GM12878 (cell line): ENCODE measurements at regions of chr1 and their contacts with region 1.

Region 1: GRCh38 chr1:28248283-28249012 is 10.9 kb upstream of the SESN2 start:
- DNase-seq: no peak
- ATAC-seq: peak; percentile 53
- H3K4me3 ChIP-seq: peak overlapping the region; percentile 3; the same call in 1 of the 2 replicates
- H3K27ac ChIP-seq: peak overlapping the region; percentile 87
- H3K4me1 ChIP-seq: peaks cover 39% of the 10 kb centered on the region
- H3K27me3 ChIP-seq: no peaks in the 10 kb centered on the region
- CTCF ChIP-seq: peak; percentile 86 to 98 (median 91)
- EP300 ChIP-seq: no peak
- POLR2A ChIP-seq: 0 out of 2 replicates have a peak, but pooled peaks have one; percentile 13
- RAD21 ChIP-seq: peak; percentile 87

Region 2: DNA sequence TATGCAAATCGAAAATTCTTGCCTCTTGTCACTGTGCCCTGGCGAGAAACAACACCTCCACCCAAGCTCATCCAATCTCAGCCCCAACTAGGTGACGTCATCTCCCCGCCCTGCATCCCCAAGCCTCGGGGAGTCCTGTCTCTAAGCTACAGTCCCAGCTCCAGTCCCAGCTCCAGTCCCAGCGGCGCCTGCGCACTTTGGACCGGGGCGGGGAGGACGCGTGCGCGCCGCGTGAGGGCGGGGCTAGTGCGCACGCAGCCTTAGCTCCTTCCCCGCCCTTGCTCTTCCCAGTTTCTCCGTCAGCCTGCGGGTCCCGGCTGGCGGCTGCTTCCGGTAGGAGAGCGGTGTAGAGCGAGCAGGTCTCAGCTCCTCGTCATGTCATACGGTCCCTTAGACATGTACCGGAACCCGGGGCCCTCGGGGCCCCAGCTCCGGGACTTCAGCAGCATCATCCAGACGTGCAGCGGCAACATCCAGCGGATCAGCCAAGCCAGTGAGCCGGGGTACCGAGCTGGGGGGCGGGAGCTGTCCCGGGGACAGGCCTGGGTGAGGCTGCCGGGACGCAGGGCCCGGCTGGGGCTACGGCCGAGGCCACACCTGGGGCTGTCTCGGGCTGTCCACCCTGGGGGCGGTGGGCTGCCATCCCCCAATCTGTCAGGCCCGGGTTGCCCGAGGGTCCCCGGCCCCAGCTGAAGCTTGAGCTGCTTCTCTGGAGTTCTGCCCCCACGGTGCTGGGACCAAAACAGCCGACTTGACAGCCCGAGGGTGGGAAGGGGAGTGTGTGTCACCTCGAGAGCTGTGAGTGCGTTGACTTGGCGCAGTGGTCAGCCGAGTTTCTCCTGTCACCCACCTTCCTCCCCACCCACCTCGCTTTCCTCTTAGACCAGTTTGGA is 475.3 kb before region 1 on chr1 and contains the start of gene STX12:
- CTCF ChIA-PET with region 1: no interaction called
- POLR2A ChIA-PET with region 1: no interaction called
- RAD21 ChIA-PET with region 1: no interaction called
- SMC1A ChIA-PET with region 1: no interaction called
- in situ Hi-C with region 1: no loop called
- intact Hi-C with region 1: loop called (anchors 10 kb)
- DNase-seq: peak; percentile 100
- ATAC-seq: peak; percentile 93
- H3K4me3 ChIP-seq: peak within 1 kb of the TSS; percentile 81
- H3K27ac ChIP-seq: peak within 1 kb of the TSS; percentile 89
- H3K4me1 ChIP-seq: peaks cover 6% of the 10 kb centered on the region
- H3K27me3 ChIP-seq: no peaks in the 10 kb centered on the region
- CTCF ChIP-seq: no peak
- EP300 ChIP-seq: no peak
- POLR2A ChIP-seq: peak; percentile 87
- RAD21 ChIP-seq: no peak
- polyA plus RNA-seq, gene STX12: 23.5 to 26.9 TPM

Region 3: DNA sequence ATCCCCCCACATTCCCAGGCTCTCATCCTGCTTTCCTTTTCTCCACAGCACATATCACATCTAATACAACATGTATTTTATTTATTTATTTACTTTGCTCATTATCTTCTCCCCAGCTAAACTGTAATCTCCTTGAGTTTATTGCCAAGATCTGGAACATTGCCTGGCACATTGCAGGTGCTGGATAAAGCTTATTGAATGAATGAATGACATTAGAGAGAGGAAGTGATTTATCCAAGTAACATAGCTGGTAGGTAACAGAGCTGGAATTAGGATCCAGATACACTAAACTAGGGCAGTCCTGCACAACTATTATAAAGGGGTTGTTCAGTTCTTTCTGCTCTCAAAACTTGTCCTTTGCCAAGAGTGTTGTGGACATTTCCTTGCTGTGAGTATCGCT is 63.4 kb before region 1 on chr1:
- CTCF ChIA-PET with region 1: no interaction called
- POLR2A ChIA-PET with region 1: no interaction called
- RAD21 ChIA-PET with region 1: no interaction called
- SMC1A ChIA-PET with region 1: no interaction called
- in situ Hi-C with region 1: no loop called
- intact Hi-C with region 1: no loop called
- DNase-seq: no peak
- ATAC-seq: no peak
- H3K4me3 ChIP-seq: no peak overlapping the region
- H3K27ac ChIP-seq: no peak overlapping the region
- H3K4me1 ChIP-seq: peaks cover 3% of the 10 kb centered on the region
- H3K27me3 ChIP-seq: no peaks in the 10 kb centered on the region
- CTCF ChIP-seq: no peak
- EP300 ChIP-seq: no peak
- POLR2A ChIP-seq: no peak
- RAD21 ChIP-seq: no peak

Region 4: GRCh38 chr1:28235755-28236655 is 12.4 kb before region 1 on chr1 and contains the start of gene ATP5IF1:
- CTCF ChIA-PET with region 1: interaction called, 28 read pairs
- POLR2A ChIA-PET with region 1: interaction called, 125 read pairs
- RAD21 ChIA-PET with region 1: interaction called, 54 read pairs
- SMC1A ChIA-PET with region 1: interaction called, 84 read pairs
- in situ Hi-C with region 1: no loop called
- intact Hi-C with region 1: no loop called
- DNase-seq: peak; percentile 96
- ATAC-seq: peak; percentile 94
- H3K4me3 ChIP-seq: peak within 1 kb of the TSS; percentile 71
- H3K27ac ChIP-seq: peak within 1 kb of the TSS; percentile 86
- H3K4me1 ChIP-seq: peaks cover 10% of the 10 kb centered on the region
- H3K27me3 ChIP-seq: no peaks in the 10 kb centered on the region
- CTCF ChIP-seq: no peak
- EP300 ChIP-seq: no peak
- POLR2A ChIP-seq: peak; percentile 99
- RAD21 ChIP-seq: no peak
- polyA plus RNA-seq, gene ATP5IF1: 296 to 883 TPM

Region 5: GRCh38 chr1:28329395-28330153 is 81.1 kb after region 1 on chr1:
- CTCF ChIA-PET with region 1: interaction called, 28 read pairs
- POLR2A ChIA-PET with region 1: interaction called, 10 read pairs
- RAD21 ChIA-PET with region 1: interaction called, 17 read pairs
- SMC1A ChIA-PET with region 1: interaction called, 33 read pairs
- in situ Hi-C with region 1: no loop called
- intact Hi-C with region 1: loop called (anchors 2 kb)
- DNase-seq: no peak
- ATAC-seq: peak; percentile 69
- H3K4me3 ChIP-seq: peak overlapping the region; percentile 76
- H3K27ac ChIP-seq: peak overlapping the region; percentile 91
- H3K4me1 ChIP-seq: peaks cover 11% of the 10 kb centered on the region
- H3K27me3 ChIP-seq: no peaks in the 10 kb centered on the region
- CTCF ChIP-seq: no peak
- EP300 ChIP-seq: no peak
- POLR2A ChIP-seq: no peak
- RAD21 ChIP-seq: no peak

Region 6: GRCh38 chr1:28409090-28409489 is 160.6 kb after region 1 on chr1:
- CTCF ChIA-PET with region 1: interaction called, 42 read pairs
- POLR2A ChIA-PET with region 1: interaction called, 3 read pairs
- RAD21 ChIA-PET with region 1: interaction called, 9 read pairs
- SMC1A ChIA-PET with region 1: interaction called, 17 read pairs
- in situ Hi-C with region 1: no loop called
- intact Hi-C with region 1: no loop called
- DNase-seq: no peak
- ATAC-seq: no peak
- H3K4me3 ChIP-seq: no peak overlapping the region
- H3K27ac ChIP-seq: no peak overlapping the region
- H3K4me1 ChIP-seq: no peaks in the 10 kb centered on the region
- H3K27me3 ChIP-seq: no peaks in the 10 kb centered on the region
- CTCF ChIP-seq: no peak
- EP300 ChIP-seq: no peak
- POLR2A ChIP-seq: no peak
- RAD21 ChIP-seq: no peak

Region 7: GRCh38 chr1:28581536-28582247 is 333.2 kb after region 1 on chr1:
- CTCF ChIA-PET with region 1: interaction called, 22 read pairs
- POLR2A ChIA-PET with region 1: interaction called, 4 read pairs
- RAD21 ChIA-PET with region 1: interaction called, 8 read pairs
- SMC1A ChIA-PET with region 1: interaction called, 10 read pairs
- in situ Hi-C with region 1: no loop called
- intact Hi-C with region 1: no loop called
- DNase-seq: peak; percentile 78
- ATAC-seq: peak; percentile 91
- H3K4me3 ChIP-seq: peak overlapping the region; percentile 99
- H3K27ac ChIP-seq: peak overlapping the region; percentile 55
- H3K4me1 ChIP-seq: peaks cover 14% of the 10 kb centered on the region
- H3K27me3 ChIP-seq: no peaks in the 10 kb centered on the region
- CTCF ChIP-seq: peak in 1 of 3 experiments; percentile 7; a peak in 1 of 6 replicates
- EP300 ChIP-seq: 0 out of 4 replicates have a peak, but pooled peaks of 1 of the 2 experiments have one; percentile 22
- POLR2A ChIP-seq: peak; percentile 100
- RAD21 ChIP-seq: no peak